ENCODE measurements at regions of chr6 and their contacts with region 1.

Region 1: DNA sequence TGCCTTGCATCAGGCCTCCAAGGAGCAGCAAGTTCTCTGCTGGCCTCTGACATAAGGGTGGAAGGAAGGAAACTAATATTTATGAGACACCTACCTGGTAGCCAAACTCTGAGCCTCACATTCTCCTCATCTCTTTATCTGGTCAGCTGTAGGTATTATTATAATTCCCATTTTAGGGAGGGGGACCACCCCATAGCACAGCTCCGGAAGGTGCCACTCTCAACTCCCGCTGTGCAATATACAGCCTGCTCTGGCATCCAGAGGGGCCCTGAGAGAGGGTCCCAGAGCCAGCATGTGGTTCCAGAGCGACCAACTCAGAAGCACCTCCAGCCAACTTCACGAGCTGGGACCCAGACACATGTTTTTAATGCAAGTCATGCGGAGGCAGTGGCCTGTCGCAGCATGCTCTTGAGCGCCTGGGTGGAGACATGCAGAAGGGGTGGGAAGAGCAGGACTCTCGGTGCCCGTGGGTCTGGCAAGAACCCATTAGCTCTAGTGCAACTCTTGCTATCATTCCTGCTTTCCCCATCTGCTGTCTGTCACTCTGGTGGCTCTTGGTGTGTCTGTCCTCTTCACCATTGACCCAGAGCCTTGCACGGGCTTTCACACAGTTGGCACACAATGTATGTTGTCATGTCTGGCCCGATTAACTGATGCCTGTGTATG is 15.0 kb upstream of the MYMX start:
- DNase-seq: no peak
- H3K4me3 ChIP-seq: no peak overlapping the region
- H3K27ac ChIP-seq: no peak overlapping the region
- H3K4me1 ChIP-seq: peaks cover 0 to 22% (median 11%) of the 10 kb centered on the region in 4 experiments
- H3K27me3 ChIP-seq: no peaks in the 10 kb centered on the region

Region 2: DNA sequence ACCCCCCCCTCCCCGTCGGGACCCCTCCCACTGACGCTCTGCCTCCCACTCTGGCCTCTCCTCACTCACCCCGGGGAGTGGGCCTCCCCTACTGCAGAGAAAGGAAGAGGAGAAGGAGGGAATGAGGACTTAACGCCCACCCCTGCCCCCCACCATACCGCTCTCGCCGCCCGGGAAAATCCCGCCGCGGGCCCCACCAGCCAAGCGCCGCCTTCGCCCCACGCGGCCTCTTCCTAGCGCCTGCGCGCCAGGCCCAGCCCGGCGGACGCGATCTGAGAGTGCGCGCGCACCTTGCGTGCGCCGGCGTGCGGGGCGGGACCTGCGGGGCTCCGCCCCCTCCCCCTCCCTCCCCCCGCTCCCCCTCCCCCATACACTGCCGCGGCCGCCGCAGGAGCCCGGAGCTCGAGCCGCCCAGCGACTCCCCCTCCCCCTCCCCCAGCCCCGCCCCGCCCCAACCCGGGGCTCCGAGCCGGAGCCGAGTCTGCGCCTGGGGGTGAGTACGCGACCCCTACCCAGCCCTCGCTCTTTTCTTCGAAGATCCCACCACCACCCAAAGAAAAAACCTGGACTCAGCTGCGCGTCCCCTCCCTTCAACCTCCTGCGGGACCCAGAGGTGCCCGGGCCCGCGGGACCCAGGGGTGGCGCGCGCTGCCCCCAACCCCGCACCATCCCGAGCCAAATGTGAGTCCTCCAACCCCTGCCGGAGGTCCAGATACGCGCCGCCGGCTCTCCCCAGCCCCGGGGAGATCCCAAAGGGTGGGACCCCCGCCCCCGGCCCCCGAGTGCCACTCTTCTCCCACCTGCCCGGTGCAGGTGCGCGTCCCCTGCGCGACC is 74.4 kb before region 1 on chr6 and contains the starts of genes MRPL14 and TMEM63B:
- CTCF ChIA-PET with region 1: no interaction called
- POLR2A ChIA-PET with region 1: no interaction called
- DNase-seq: peak; percentile 77 to 86 (median 84)
- H3K4me3 ChIP-seq: peak within 1 kb of the TSS; percentile 77 to 91 (median 85)
- H3K27ac ChIP-seq: peak within 1 kb of the TSS in 1 of 2 experiments; percentile 83
- H3K4me1 ChIP-seq: peaks cover 25 to 53% (median 39%) of the 10 kb centered on the region in 4 experiments
- H3K27me3 ChIP-seq: peaks cover 0 to 13% (median 9%) of the 10 kb centered on the region in 5 experiments

Region 3: GRCh38 chr6:44214307-44214706 is 12.5 kb after region 1 on chr6:
- CTCF ChIA-PET with region 1: interaction called, 12 read pairs
- POLR2A ChIA-PET with region 1: no interaction called
- DNase-seq: no peak
- H3K4me3 ChIP-seq: no peak overlapping the region
- H3K27ac ChIP-seq: no peak overlapping the region
- H3K4me1 ChIP-seq: peaks cover 0 to 43% (median 34%) of the 10 kb centered on the region in 4 experiments
- H3K27me3 ChIP-seq: no peaks in the 10 kb centered on the region